Ovary (tissue), 10 donors: ENCODE measurements at regions of chr16 and their contacts with region 1.

Region 1: GRCh38 chr16:1428511-1428910 is 2.4 kb upstream of the PERCC1 start:
- DNase-seq: no peak
- H3K4me3 ChIP-seq: no peak overlapping the region
- H3K27ac ChIP-seq: no peak overlapping the region
- H3K4me1 ChIP-seq: no peaks in the 10 kb centered on the region
- H3K27me3 ChIP-seq: no peaks in the 10 kb centered on the region
- CTCF ChIP-seq: no peak
- EP300 ChIP-seq: no peak
- POLR2A ChIP-seq: no peak

Region 2: GRCh38 chr16:1492923-1493745 is 64.6 kb after region 1 on chr16 and contains the start of gene TELO2:
- intact Hi-C with region 1: loop called in 1 of 4 experiments (anchors 10 kb)
- DNase-seq: peak; percentile 75 to 89 (median 87)
- H3K4me3 ChIP-seq: peak within 1 kb of the TSS; percentile 66
- H3K27ac ChIP-seq: peak within 1 kb of the TSS; percentile 51 to 64
- H3K4me1 ChIP-seq: peaks cover 6% of the 10 kb centered on the region
- H3K27me3 ChIP-seq: no peaks in the 10 kb centered on the region
- CTCF ChIP-seq: peak in 1 of 3 donors; percentile 3
- EP300 ChIP-seq: no peak
- POLR2A ChIP-seq: peak; percentile 29
- total RNA-seq, gene TELO2: 9.9 to 36.8 (median 32.8) TPM

Region 3: GRCh38 chr16:1610276-1611017 is 181.9 kb after region 1 on chr16:
- intact Hi-C with region 1: no loop called
- DNase-seq: peak; percentile 84 to 96 (median 90)
- H3K4me3 ChIP-seq: peak overlapping the region; percentile 57
- H3K27ac ChIP-seq: peak overlapping the region; percentile 24 to 67
- H3K4me1 ChIP-seq: peaks cover 14% of the 10 kb centered on the region
- H3K27me3 ChIP-seq: no peaks in the 10 kb centered on the region
- CTCF ChIP-seq: no peak
- EP300 ChIP-seq: no peak
- POLR2A ChIP-seq: no peak